ENCODE measurements at regions of chr3 and their contacts with region 1.

Region 1: DNA sequence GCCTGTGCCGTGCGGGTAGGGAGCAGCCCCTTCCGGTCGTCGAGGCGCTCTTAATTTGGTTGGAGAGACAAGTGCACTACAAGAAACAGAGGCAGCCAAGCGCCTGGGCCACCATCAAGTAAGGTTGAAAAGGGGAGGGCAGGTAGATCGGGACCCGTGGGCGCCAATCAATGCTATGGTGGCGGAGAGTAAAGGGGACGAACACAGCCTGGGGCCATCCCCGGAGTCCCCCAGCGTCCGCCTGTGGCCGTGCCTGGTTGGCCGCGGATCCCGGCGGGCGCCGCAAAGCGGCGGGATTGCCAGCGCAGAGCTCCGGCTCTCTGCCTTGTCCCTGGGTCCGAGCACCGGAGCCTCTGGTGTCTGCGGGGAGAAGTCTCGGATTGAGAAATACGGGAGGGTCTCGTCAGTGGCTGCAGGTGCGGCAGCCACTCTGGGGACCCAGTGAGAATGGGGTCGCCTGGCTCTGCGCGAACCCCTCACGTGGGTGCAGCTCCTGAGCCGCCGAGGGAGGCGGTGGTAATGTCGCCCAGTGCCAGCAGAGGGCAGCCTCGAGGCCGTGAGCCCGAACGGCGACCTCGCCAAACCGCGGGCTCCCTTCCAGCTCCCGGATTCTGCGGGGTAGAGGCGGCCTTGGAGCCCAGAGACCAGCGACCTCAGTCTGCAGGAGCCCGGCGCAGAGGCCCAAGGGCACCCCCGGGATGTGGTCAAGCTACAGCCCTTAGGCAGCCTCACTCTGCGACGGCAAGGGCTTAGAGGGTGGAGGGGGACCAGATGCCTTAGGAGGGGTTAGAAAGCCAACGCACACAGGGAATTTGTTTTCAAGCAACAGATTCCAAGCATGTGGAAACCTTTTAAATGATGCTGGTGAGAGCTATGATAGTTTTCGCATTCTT is 10.8 kb downstream of the FOXL2 start:
- DNase-seq: peak; percentile 71
- ATAC-seq: peak; percentile 82
- H3K4me3 ChIP-seq: peak overlapping the region; percentile 65
- H3K27ac ChIP-seq: no peak overlapping the region
- H3K4me1 ChIP-seq: peaks cover 4% of the 10 kb centered on the region; the same call in 1 of the 2 replicates
- H3K27me3 ChIP-seq: no peaks in the 10 kb centered on the region
- CTCF ChIP-seq: peak; percentile 69

Region 2: DNA sequence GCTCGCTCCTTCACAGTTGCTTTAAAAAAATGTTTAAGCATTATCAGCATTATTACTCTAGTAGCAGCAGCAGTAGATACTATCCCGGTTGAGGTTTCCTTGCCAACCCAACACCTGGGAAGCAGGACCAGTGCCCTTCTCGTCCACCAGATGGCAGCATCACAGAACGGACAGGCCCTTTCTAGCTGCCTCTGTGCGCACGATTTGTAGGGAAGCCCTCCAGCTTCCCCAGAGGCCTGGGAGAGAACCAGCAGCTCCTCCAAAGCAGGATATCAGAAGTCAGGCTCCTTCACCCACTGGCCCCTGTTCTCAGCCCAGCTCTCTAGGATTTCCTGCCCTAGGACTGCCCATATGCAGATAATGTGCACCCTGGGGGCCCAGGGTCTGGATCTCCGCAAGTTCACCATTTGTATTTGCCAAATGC is 518.5 kb before region 1 on chr3:
- CTCF ChIA-PET with region 1: interaction called, 11 read pairs
- POLR2A ChIA-PET with region 1: no interaction called
- intact Hi-C with region 1: no loop called
- DNase-seq: peak; percentile 80
- ATAC-seq: peak; percentile 96
- H3K4me3 ChIP-seq: no peak overlapping the region
- H3K27ac ChIP-seq: no peak overlapping the region
- H3K4me1 ChIP-seq: no peaks in the 10 kb centered on the region
- H3K27me3 ChIP-seq: no peaks in the 10 kb centered on the region
- CTCF ChIP-seq: peak; percentile 86

Region 3: DNA sequence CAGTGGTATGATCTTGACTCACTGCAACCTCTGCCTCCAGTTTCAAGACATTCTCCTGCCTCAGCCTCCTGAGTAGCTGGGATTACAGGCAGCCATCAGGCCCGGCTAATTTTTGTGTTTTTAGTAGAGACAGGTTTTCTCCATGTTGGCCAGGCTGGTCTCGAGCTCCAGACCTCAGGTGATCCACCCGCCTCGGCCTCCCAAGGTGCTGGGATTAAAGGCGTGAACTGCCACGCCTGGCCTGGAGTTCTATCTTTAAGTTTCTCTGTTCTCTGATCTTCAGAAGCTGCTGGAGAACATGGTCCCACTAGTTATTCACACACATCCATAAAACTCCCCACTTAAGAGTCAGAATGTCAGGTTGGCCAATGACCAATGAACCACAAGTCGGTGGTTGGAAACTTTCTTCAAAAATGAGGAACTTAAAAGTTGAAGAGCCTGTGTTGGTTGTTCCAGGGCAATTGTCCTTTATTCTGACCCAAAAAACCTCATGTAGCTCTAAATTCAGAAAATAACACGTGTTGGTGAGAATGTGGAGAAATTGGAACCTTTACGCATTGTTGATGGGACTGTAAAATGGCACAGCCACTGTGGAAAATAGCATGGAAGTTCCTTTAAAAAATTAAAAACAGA is 45.4 kb before region 1 on chr3:
- CTCF ChIA-PET with region 1: no interaction called
- POLR2A ChIA-PET with region 1: no interaction called
- intact Hi-C with region 1: no loop called
- DNase-seq: no peak
- ATAC-seq: no peak
- H3K4me3 ChIP-seq: no peak overlapping the region
- H3K27ac ChIP-seq: peak overlapping the region; percentile 45
- H3K4me1 ChIP-seq: peaks cover 6% of the 10 kb centered on the region
- H3K27me3 ChIP-seq: no peaks in the 10 kb centered on the region
- CTCF ChIP-seq: no peak

Region 4: DNA sequence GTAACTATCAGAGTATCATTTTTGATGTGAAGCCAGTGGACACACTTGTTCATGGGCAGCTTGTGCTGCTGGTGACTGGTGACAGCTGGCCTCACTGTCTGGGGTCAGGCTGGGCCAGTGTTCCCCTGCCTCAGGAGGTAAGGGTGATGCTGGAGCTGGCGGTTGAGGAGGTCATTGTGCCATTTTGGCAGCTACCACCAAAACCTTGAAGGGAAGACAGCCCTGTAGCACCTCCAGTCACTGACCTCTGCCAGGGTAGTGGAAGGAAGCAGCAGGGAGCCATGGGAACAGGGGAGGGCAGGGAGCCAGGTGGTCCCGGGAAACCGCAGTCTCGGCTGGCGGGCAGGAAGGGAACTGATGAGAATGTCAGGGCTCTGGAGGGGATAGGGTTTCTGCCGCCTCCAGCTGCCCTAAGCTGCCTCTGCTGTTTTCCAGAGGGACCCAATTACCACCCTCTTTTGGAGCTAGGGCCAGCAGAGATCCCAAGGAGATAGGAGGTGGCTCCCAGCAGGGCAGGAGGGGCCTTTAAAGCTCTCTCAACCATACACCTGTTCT is 35.7 kb after region 1 on chr3:
- CTCF ChIA-PET with region 1: no interaction called
- POLR2A ChIA-PET with region 1: no interaction called
- intact Hi-C with region 1: no loop called
- DNase-seq: no peak
- ATAC-seq: no peak
- H3K4me3 ChIP-seq: no peak overlapping the region
- H3K27ac ChIP-seq: no peak overlapping the region
- H3K4me1 ChIP-seq: peaks cover 8% of the 10 kb centered on the region
- H3K27me3 ChIP-seq: no peaks in the 10 kb centered on the region
- CTCF ChIP-seq: no peak

Region 5: DNA sequence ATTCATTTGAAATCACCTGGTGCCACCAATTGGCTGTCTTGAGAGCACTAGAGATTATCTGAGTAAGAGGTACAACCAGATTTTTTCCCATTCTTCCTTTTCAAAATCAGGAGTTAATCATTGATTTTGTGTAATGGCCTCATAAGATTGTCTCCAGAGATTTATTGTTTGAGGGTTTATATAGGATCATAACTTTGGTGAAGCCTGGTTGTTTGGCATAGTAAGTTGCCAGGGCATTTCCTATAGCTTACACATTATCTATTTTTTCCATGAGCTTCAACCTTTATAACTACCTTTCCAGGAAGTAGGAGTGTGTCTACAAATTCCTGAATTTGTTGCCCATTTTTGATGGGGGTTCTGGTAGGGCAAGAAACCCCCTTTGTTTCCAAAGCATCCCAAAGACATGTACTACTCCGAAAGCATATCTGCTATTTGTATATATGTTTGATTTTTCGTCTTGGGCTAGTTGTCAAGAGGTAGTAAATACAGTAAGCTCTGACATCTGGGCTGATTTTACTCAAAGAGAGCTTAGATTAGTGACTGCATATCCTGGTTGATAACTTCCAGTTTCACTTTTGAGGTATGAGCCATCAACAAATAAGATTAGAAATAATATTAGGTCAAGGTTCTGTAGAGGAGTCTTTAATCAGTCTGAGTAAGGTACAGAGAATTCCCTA is 96.4 kb after region 1 on chr3:
- CTCF ChIA-PET with region 1: no interaction called
- POLR2A ChIA-PET with region 1: no interaction called
- intact Hi-C with region 1: loop called (anchors 10 kb)
- DNase-seq: no peak
- ATAC-seq: no peak
- H3K4me3 ChIP-seq: no peak overlapping the region
- H3K27ac ChIP-seq: no peak overlapping the region
- H3K4me1 ChIP-seq: no peaks in the 10 kb centered on the region
- H3K27me3 ChIP-seq: peaks cover 17% of the 10 kb centered on the region; the same call in 1 of the 2 replicates
- CTCF ChIP-seq: no peak

Region 6: DNA sequence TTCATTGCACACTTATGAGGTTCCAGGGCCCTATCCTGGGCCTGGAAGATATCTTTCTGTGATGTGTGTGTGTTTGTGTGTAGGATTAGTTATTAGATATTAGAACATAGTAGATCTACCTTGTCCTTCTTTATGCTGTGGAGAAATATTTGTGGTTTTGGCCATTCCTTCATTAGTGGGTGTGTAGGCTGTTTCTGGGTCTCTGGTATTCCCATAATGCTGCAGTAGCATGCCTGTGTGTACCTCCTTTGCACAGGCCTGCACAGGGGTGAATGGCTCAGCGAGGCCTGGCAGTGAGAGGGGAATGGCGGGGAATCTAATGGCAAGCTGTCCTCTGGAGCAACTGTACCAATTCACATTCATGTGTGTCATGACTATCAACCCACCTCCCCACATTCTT is 282.0 kb after region 1 on chr3:
- CTCF ChIA-PET with region 1: interaction called, 10 read pairs
- POLR2A ChIA-PET with region 1: no interaction called
- intact Hi-C with region 1: loop called (anchors 10 kb)
- DNase-seq: no peak
- ATAC-seq: no peak
- H3K4me3 ChIP-seq: no peak overlapping the region
- H3K27ac ChIP-seq: no peak overlapping the region
- H3K4me1 ChIP-seq: no peaks in the 10 kb centered on the region
- H3K27me3 ChIP-seq: 0 out of 2 replicates have a peak, but pooled peaks cover 3% of the 10 kb centered on the region
- CTCF ChIP-seq: no peak

Region 7: GRCh38 chr3:139302084-139302800 is 366.1 kb after region 1 on chr3:
- CTCF ChIA-PET with region 1: interaction called, 12 read pairs
- POLR2A ChIA-PET with region 1: no interaction called
- intact Hi-C with region 1: no loop called
- DNase-seq: peak; percentile 94
- ATAC-seq: peak; percentile 91
- H3K4me3 ChIP-seq: no peak overlapping the region; the same call in 1 of the 2 replicates
- H3K27ac ChIP-seq: peak overlapping the region; percentile 58
- H3K4me1 ChIP-seq: peaks cover 55% of the 10 kb centered on the region
- H3K27me3 ChIP-seq: no peaks in the 10 kb centered on the region
- CTCF ChIP-seq: no peak

Region 8: DNA sequence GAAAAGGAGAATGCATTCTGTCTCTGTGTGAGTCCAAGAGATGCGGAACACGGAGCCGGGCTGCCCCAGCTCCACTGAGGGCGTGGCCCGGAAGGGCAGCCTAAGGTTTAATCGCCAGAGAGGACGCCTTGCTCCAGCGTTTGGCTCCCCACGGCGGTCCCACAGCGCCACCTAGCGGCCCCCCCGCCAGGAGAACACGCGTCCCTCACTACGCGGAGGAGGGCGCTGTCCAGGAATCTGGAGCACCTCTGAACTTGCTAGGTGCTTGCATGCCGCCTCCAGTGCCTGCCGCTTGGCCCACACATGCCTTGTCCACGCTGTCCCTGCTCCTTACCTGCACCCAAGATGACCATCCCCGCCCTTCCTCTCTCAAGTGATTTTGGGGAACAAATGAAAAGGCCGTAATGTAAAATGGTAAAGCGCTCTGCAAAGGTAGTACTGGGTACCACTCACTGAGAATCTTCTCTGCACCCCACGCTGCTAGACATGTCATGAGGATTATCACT is 393.3 kb after region 1 on chr3:
- CTCF ChIA-PET with region 1: no interaction called
- POLR2A ChIA-PET with region 1: no interaction called
- intact Hi-C with region 1: loop called (anchors 5 kb)
- DNase-seq: peak; percentile 85
- ATAC-seq: peak; percentile 97
- H3K4me3 ChIP-seq: no peak overlapping the region
- H3K27ac ChIP-seq: no peak overlapping the region
- H3K4me1 ChIP-seq: peaks cover 4% of the 10 kb centered on the region; the same call in 1 of the 2 replicates
- H3K27me3 ChIP-seq: peaks cover 22% of the 10 kb centered on the region
- CTCF ChIP-seq: peak; percentile 97